ENCODE measurements at regions of chr16 and their contacts with region 1.

Region 1: GRCh38 chr16:1398826-1399601 is 15.5 kb downstream of the UNKL start:
- DNase-seq: no peak
- ATAC-seq: peak; percentile 10 to 31
- H3K4me3 ChIP-seq: no peak overlapping the region
- H3K27ac ChIP-seq: no peak overlapping the region
- H3K4me1 ChIP-seq: no peaks in the 10 kb centered on the region
- H3K27me3 ChIP-seq: no peaks in the 10 kb centered on the region

Region 2: GRCh38 chr16:1331712-1332617 is 67.0 kb before region 1 on chr16:
- intact Hi-C with region 1: loop called in 1 of 4 experiments (anchors 10 kb)
- DNase-seq: peak; percentile 58 to 79 (median 78)
- ATAC-seq: peak; percentile 4 to 17
- H3K4me3 ChIP-seq: peak overlapping the region; percentile 49
- H3K27ac ChIP-seq: peak overlapping the region; percentile 2
- H3K4me1 ChIP-seq: no peaks in the 10 kb centered on the region
- H3K27me3 ChIP-seq: no peaks in the 10 kb centered on the region

Measured in right cardiac atrium (tissue), 5 donors.